Calu3 (cell line): ENCODE measurements at regions of chr15 and their contacts with region 1.

Region 1: GRCh38 chr15:70036585-70037291 is 61.0 kb downstream of the TLE3 start:
- DNase-seq: no peak
- H3K4me3 Mint-ChIP-seq: no peak overlapping the region
- H3K27ac Mint-ChIP-seq: no peak overlapping the region
- H3K4me1 Mint-ChIP-seq: no peaks in the 10 kb centered on the region
- H3K27me3 Mint-ChIP-seq: peaks cover 86% of the 10 kb centered on the region
- CTCF ChIP-seq: no peak

Region 2: GRCh38 chr15:70023064-70023768 is 13.5 kb before region 1 on chr15:
- CTCF ChIA-PET with region 1: interaction called, 10 read pairs
- intact Hi-C with region 1: no loop called
- DNase-seq: no peak
- H3K4me3 Mint-ChIP-seq: no peak overlapping the region
- H3K27ac Mint-ChIP-seq: no peak overlapping the region
- H3K4me1 Mint-ChIP-seq: no peaks in the 10 kb centered on the region
- H3K27me3 Mint-ChIP-seq: peaks cover 98% of the 10 kb centered on the region
- CTCF ChIP-seq: no peak

Region 3: GRCh38 chr15:70955151-70955550 is 918.4 kb after region 1 on chr15:
- CTCF ChIA-PET with region 1: no interaction called
- intact Hi-C with region 1: no loop called
- DNase-seq: no peak
- H3K4me3 Mint-ChIP-seq: no peak overlapping the region
- H3K27ac Mint-ChIP-seq: no peak overlapping the region
- H3K4me1 Mint-ChIP-seq: no peaks in the 10 kb centered on the region
- H3K27me3 Mint-ChIP-seq: no peaks in the 10 kb centered on the region
- CTCF ChIP-seq: no peak